ENCODE measurements at regions of chr7 and their contacts with region 1.

Region 1: GRCh38 chr7:6271060-6271658 is 1.3 kb downstream of the CYTH3 start:
- DNase-seq: no peak
- H3K4me3 ChIP-seq: peak overlapping the region; percentile 92
- H3K27ac ChIP-seq: no peak overlapping the region
- H3K27me3 ChIP-seq: no peaks in the 10 kb centered on the region
- CTCF ChIP-seq: peak; percentile 46

Region 2: DNA sequence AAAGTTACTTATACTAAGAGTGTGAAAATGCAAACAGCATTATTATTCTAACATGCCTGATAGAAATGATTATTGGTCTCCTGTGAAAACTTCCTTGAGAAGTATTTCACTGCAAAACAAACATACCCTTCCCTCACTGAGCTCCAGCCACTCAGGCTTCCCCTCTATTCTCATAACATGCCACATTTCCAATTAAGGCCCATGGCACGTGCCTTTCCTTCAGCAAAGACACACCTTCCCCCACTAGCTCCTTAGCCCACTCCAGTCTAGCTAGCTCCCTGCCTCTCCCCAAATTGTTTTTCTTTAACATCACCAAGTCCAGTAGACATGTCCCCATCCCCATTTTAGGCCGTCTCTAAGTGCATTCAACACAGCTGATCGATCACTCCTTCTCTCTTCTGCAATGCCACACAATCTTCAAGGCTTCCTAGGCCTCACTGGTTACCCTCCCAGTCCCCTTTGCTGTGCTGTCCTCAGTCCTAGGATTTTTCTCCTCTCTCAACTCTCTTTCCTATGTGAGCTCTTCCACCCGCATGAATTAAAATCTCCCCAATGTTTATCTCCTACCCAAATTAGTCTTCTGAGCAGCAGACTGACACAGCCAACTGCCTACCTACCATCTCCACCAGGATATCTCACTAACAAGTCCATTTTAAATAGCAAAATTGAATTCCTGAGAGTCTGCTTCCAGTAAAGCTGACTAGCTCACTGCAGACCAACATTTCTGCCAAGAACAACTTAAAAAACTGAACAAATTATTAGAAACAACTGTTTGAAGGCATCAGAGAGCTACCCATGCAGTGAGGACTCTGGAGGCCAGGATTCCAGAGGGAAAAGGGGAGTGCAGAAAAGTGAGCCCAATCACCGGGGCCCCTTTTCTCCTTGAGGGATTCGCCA is 10.6 kb before region 1 on chr7:
- CTCF ChIA-PET with region 1: interaction called, 15 read pairs
- POLR2A ChIA-PET with region 1: interaction called, 3 read pairs
- DNase-seq: no peak
- H3K4me3 ChIP-seq: no peak overlapping the region
- H3K27ac ChIP-seq: peak overlapping the region; percentile 3
- H3K27me3 ChIP-seq: no peaks in the 10 kb centered on the region
- CTCF ChIP-seq: no peak

Region 3: DNA sequence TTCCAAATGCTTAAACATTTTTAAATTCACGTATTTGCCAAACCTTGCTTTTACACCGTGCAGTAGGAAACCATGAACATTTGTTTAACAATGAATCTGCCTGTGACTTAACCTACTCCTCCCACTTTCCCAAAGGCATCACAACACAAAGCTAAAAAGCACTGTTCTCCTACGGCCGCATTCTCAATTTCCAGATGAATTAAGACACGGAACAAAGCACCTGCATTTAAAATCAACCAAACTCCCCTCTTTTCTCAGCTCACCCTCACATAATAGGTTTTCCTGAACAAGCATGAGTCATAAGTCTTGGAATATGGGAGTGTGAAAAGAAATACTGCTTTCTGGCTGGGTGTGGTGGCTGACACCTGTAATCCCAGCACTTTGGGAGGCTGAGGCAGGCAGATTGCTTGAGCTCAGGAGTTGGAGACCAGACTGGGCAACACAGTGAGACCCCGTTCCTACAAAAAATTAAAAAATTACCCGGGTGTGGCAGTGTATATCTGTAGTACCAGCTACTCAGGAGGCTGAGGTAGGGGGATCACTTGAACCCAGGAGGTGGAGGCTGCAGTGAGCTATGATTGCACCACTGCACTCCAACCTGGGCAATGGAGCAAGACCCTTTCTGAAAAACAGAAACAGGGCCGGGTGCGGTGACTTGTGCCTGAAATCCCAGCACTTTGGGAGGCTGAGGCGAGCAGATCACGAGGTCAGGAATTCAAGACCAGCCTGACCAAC is 53.0 kb after region 1 on chr7:
- CTCF ChIA-PET with region 1: interaction called, 12 read pairs
- POLR2A ChIA-PET with region 1: no interaction called
- DNase-seq: no peak
- H3K4me3 ChIP-seq: no peak overlapping the region
- H3K27ac ChIP-seq: no peak overlapping the region
- H3K27me3 ChIP-seq: no peaks in the 10 kb centered on the region
- CTCF ChIP-seq: no peak